ENCODE measurements at regions of chr7 and their contacts with region 1.

Region 1: DNA sequence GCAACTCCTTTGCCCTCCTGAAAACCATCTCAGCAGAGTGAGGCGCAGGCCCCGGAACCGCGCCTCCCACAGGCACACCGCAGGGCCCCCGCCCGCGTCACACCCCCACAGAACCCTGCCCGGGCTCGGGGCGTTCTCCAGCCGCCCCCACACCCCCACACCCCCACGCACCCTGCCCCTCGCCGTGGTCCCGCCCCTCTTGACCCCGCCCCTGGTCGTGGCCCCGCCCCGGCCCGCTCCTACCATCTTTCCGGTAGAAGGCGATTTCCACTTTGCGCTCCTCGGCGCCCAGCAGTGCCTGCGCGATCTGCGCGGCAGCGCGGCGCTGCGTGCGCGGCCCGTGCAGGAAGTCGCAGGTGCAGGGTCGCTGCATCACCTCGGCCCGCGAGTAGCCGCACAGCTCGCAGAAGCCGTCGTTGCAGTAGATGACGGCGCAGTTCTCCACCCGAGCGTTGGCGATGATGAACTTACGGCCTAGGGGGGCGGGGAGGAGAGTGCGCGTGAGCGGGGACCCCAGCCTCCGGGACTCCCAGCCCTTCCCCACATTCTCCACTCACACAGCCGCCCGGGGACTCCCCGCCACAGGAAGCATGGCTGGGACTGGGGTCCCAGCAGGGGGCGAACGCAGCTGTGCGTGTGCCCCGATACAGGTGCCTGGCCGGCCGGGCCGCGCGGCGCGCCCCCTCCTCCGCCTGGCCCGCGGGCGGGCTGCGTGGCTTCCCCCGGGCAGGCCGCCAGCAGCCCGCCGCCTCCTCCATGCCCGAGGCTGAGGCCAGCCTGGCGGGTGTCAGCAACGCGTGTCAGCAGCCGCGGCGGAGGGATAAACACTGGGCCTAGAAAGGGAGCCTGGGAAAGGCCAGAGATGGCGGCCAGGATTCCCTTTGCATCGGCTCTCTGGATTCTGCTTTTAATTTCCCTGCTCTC is 3.4 kb downstream of the KCNH2 start:
- DNase-seq: peak in 1 of 2 experiments; percentile 67
- H3K4me3 ChIP-seq: peak overlapping the region; percentile 65
- H3K27ac ChIP-seq: no peak overlapping the region
- H3K4me1 ChIP-seq: 0 out of 2 replicates have a peak, but pooled peaks cover 4% of the 10 kb centered on the region
- H3K27me3 ChIP-seq: peaks cover 52% of the 10 kb centered on the region
- CTCF ChIP-seq: peak; percentile 42; the same call in 1 of the 2 replicates

Region 2: DNA sequence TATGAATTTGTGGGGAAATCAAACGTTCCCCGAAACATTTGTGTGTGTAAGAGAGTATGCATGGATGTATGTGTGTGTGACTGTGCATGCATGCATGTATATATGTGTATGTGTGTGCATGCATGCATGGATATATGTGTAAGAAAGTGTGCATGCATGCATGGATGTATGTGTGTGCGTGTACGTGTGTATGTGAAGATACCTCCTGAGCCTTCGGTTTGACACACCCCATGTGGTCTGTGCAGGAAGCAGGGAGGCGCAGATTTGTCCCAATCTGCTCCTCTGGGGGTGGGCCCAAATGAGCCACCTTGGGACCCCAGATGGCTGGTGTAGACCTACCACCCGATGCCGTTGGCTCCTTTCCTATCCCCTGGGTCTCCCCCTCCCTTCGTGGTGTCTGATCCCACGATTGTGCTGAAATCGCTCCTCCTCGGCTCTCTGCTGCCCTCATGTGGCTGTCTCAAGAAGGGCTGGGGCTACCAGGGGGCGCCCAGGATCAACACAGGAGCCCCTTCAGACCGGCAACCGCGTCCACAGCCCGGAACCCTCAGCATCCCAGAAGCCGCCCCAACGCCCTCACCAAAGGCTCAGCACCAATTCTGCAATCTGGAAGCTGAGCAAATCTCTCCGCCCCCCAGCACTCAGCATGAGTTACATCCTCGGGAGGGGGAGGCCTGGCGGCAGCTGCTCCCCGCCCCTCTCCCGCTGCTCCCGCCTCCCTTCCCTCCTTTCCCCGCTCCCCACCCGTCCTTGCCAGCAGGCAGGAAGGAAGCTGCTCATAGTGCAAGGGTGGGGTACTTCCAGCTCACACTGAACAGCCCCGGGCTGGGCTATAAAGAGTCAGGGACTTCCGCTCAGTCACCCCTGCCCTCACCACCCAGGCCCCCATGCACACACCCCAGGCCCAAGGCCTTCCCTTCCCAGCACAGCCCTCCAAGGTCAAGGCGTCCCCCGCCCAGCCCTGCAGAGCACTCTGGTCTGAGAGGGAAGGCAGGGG is 13.8 kb after region 1 on chr7:
- CTCF ChIA-PET with region 1: no interaction called
- POLR2A ChIA-PET with region 1: no interaction called
- intact Hi-C with region 1: no loop called
- DNase-seq: no peak
- H3K4me3 ChIP-seq: no peak overlapping the region
- H3K27ac ChIP-seq: no peak overlapping the region
- H3K4me1 ChIP-seq: no peaks in the 10 kb centered on the region
- H3K27me3 ChIP-seq: peaks cover 22% of the 10 kb centered on the region; the same call in 1 of the 2 replicates
- CTCF ChIP-seq: peak; percentile 58; the same call in 1 of the 2 replicates

Region 3: GRCh38 chr7:151038951-151039849 is 64.5 kb after region 1 on chr7:
- CTCF ChIA-PET with region 1: no interaction called
- POLR2A ChIA-PET with region 1: interaction called, 17 read pairs
- intact Hi-C with region 1: no loop called
- DNase-seq: peak; percentile 86 to 95
- H3K4me3 ChIP-seq: no peak overlapping the region; the same call in 1 of the 2 replicates
- H3K27ac ChIP-seq: peak overlapping the region; percentile 72
- H3K4me1 ChIP-seq: peaks cover 26% of the 10 kb centered on the region
- H3K27me3 ChIP-seq: no peaks in the 10 kb centered on the region
- CTCF ChIP-seq: no peak

Region 4: DNA sequence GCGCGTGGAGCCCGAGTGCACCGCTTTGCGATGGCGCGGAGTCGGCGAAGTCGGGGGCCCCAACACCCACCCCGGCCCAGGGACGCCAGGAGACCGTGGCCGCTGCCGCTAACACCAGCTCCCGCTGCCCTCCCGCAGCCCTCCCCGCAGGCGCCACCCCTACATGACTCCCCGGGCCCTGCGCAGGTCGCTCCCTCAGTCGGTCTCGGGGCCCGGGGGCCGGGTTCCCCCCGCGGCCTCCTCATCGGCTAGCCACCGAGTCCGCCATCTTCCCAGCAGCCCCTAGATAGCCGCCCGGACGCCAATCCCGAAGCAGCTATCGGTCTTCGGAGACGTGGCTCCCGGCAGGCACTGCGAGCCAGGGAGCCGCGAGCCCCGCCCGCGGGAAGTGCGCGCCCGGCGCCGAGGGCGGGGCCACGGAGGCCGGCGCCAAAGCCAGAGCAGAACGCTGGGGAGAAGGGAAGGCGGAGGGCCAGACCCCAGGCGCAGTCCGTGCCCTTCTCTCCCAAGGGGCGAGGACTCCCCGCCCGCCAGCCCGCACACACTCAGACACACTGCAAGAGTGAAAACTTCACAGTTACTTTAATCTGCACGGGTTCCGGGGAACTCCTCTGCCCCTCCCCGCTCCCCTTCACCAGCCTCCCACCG is 105.9 kb after region 1 on chr7 and contains the start of gene FASTK:
- CTCF ChIA-PET with region 1: no interaction called
- POLR2A ChIA-PET with region 1: no interaction called
- intact Hi-C with region 1: loop called (anchors 10 kb)
- DNase-seq: peak; percentile 82 to 93
- H3K4me3 ChIP-seq: peak within 1 kb of the TSS; percentile 89
- H3K27ac ChIP-seq: peak within 1 kb of the TSS; percentile 70
- H3K4me1 ChIP-seq: peaks cover 35% of the 10 kb centered on the region
- H3K27me3 ChIP-seq: no peaks in the 10 kb centered on the region
- CTCF ChIP-seq: no peak
- total RNA-seq, gene FASTK: 104 and 126 TPM in 2 replicates

Region 5: DNA sequence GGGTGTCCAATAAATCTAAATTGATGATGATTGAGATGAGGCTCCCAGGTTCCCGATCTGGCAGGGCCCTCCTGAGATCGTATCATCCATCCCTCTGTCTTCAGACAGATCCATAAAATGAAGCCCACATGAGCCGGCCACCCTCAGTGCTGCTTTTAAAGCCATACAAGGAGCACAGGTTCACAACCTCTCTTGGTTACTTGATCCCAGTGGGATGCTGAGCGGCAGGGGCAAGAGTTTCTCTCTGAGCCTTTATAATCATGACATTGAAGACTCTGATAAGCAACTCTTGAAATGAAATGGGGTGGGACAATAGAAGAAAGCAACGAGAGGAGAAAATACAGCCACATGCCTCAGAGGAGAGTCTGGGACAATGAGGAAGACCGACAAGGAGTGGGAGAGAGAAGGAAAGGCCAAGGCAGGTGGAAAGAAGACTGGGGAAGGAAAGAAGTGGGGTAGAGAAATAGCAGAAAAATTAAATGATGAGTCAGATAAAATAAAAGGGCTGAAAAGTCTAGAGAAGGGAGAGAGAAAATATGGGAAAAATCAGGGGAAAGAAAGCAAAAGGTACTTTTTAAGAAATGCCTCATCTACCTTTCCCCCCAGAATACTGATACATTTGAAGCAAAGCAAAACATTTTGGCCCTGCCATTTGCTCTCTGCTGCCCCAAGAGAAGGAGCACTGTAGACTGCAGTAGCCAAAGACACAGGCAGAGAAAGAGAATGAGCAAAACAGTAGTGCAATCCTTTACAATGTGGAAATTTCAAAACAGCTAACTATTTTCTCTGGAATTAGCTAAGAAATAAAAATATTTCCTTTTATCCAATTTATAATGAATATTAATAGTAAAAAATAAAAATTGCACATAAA is 178.1 kb after region 1 on chr7:
- CTCF ChIA-PET with region 1: no interaction called
- POLR2A ChIA-PET with region 1: no interaction called
- intact Hi-C with region 1: no loop called
- DNase-seq: no peak
- H3K4me3 ChIP-seq: no peak overlapping the region
- H3K27ac ChIP-seq: no peak overlapping the region
- H3K4me1 ChIP-seq: 0 out of 2 replicates have a peak, but pooled peaks cover 7% of the 10 kb centered on the region
- H3K27me3 ChIP-seq: peaks cover 37% of the 10 kb centered on the region
- CTCF ChIP-seq: no peak